GM13977 (cell line): ENCODE measurements at regions of chr2 and their contacts with region 1.

Region 1: GRCh38 chr2:101252408-101253012 is at the start of gene CNOT11:
- DNase-seq: peak; percentile 96
- CTCF ChIP-seq: no peak

Region 2: DNA sequence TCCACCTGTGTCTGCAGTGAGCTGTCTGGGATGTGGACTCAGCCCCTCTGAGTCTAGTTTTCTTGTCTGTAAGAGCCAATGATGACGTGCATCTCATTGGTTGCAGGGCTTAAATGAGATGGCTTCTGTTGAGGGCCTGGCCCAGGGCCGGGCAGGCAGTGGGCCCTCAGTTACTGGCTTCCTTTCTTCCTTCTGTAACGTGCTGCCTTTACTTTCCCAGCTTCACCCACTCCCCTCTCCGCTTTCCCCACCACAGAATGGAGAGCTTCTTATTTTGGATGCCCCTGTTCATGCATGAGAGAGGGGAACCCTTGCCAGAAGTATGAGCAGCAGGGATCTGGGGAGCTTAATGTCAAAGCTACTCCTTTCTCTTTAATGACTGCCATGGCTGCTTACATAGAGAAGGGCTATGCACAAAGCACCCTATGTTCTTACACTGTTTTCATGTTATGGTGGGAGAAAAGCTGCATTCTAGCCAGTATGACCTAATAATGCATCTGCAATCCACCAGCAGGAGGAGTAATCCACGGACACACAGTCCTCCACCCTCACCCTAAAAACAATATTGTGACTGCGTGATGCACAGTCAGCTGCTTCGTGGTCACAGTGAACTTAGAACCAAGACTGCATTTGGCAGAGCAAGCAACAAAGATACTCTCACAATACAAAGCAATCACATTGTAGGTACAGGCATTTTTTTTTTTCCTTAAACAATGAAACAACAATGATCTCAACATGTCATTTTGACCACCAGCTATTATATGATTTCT is 97.6 kb after region 1 on chr2:
- in situ Hi-C with region 1: loop called (anchors 25 kb)
- DNase-seq: no peak
- CTCF ChIP-seq: no peak